ENCODE measurements at regions of chr11 and their contacts with region 1.

Region 1: GRCh38 chr11:57283231-57283990 is 41.3 kb downstream of the TNKS1BP1 start:
- DNase-seq: no peak
- H3K4me3 ChIP-seq: 0 out of 8 replicates have a peak overlapping the region, but pooled peaks of 1 of the 4 experiments have one; percentile 0
- H3K27ac ChIP-seq: no peak overlapping the region
- H3K4me1 ChIP-seq: peaks cover 4 to 9% (median 6%) of the 10 kb centered on the region in 4 experiments
- H3K27me3 ChIP-seq: no peaks in the 10 kb centered on the region
- CTCF ChIP-seq: no peak
- EP300 ChIP-seq: no peak
- POLR2A ChIP-seq: no peak
- RAD21 ChIP-seq: no peak

Region 2: GRCh38 chr11:57294605-57295131 is 11.3 kb after region 1 on chr11:
- CTCF ChIA-PET with region 1: interaction called, 7 read pairs
- POLR2A ChIA-PET with region 1: interaction called, 25 read pairs
- DNase-seq: no peak
- H3K4me3 ChIP-seq: no peak overlapping the region
- H3K27ac ChIP-seq: no peak overlapping the region
- H3K4me1 ChIP-seq: peaks cover 0 to 5% (median 2%) of the 10 kb centered on the region in 4 experiments; a peak in 2 of 7 replicates
- H3K27me3 ChIP-seq: no peaks in the 10 kb centered on the region
- CTCF ChIP-seq: no peak
- EP300 ChIP-seq: no peak
- POLR2A ChIP-seq: no peak
- RAD21 ChIP-seq: no peak